Heart right ventricle (tissue), 16 donors: ENCODE measurements at regions of chr1 and their contacts with region 1.

Region 1: DNA sequence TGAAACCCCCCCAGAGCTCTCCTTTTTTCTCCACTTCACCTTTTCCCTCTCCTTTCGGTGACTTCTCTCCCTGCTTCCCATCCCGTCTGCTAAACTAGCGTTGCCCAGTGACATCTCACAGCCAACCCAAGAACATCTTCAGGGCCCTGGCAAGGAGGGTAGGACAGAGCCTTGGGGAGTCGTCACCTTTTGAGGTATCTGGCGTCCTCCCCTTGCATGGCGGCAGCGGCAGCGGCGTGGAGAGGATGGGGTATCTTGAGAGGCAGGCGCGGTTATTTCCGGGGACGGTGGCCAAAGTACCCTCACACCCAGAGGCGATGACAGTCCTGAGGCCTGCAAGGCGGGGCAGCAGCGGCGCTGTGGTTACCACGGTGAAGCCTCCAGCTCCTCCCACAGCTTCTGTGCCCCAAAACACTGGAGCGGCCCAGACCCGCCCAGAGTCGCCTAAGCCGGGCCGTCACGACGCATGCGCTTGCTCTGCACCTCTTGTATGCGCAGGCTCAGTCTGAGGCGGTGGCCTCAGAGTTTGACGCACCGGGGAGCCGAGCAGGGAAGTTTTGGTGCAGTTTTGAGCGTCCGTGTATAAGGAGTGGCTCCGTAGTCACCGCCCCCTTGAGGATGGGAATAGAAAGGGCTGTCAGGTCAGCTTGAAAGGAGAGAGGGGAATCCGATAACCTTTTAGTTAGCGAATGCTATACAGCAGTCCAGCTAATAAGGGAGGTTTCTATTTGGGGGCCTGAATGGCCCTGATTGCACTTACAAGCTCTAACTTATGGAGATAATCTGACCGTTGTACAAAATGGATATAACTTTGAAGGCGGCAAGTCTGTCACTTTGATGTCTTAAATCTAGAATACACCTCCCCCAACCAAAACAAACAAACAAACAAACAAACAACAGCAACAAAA is at the start of gene KIFAP3:
- DNase-seq: peak; percentile 98
- ATAC-seq: peak; percentile 99 to 100 (median 100)
- H3K4me3 ChIP-seq: peak within 1 kb of the TSS; percentile 59 to 85 (median 75)
- H3K27ac ChIP-seq: peak within 1 kb of the TSS; percentile 78 to 95 (median 88)
- H3K4me1 ChIP-seq: peaks cover 0 to 35% (median 27%) of the 10 kb centered on the region in 9 donors
- H3K27me3 ChIP-seq: no peaks in the 10 kb centered on the region
- CTCF ChIP-seq: peak in 8 of 9 donors; percentile 40 to 80 (median 64)
- total RNA-seq, gene KIFAP3: 30.9 to 84.0 (median 60.6) TPM

Region 2: GRCh38 chr1:169928438-169929209 is 145.9 kb before region 1 on chr1:
- intact Hi-C with region 1: loop called in 1 of 10 experiments (anchors 10 kb)
- DNase-seq: no peak
- ATAC-seq: peak in 2 of 8 donors; percentile 56 to 61
- H3K4me3 ChIP-seq: no peak overlapping the region
- H3K27ac ChIP-seq: no peak overlapping the region
- H3K4me1 ChIP-seq: peaks cover 0 to 16% (median 7%) of the 10 kb centered on the region in 9 donors
- H3K27me3 ChIP-seq: no peaks in the 10 kb centered on the region
- CTCF ChIP-seq: peak; percentile 45 to 86 (median 74)

Region 3: GRCh38 chr1:170145770-170146676 is 71.5 kb after region 1 on chr1 and contains the start of gene NTMT2:
- intact Hi-C with region 1: loop called in 4 of 10 experiments (anchors 1 to 10 kb)
- DNase-seq: peak; percentile 61 to 63
- ATAC-seq: peak; percentile 88 to 97 (median 96)
- H3K4me3 ChIP-seq: peak within 1 kb of the TSS in 8 of 10 donors; percentile 6 to 42 (median 32)
- H3K27ac ChIP-seq: peak within 1 kb of the TSS; percentile 61 to 95 (median 82)
- H3K4me1 ChIP-seq: peaks cover 0 to 25% (median 12%) of the 10 kb centered on the region in 9 donors
- H3K27me3 ChIP-seq: no peaks in the 10 kb centered on the region
- CTCF ChIP-seq: no peak
- total RNA-seq, gene NTMT2: 0.92 to 3.2 (median 2.7) TPM

Region 4: DNA sequence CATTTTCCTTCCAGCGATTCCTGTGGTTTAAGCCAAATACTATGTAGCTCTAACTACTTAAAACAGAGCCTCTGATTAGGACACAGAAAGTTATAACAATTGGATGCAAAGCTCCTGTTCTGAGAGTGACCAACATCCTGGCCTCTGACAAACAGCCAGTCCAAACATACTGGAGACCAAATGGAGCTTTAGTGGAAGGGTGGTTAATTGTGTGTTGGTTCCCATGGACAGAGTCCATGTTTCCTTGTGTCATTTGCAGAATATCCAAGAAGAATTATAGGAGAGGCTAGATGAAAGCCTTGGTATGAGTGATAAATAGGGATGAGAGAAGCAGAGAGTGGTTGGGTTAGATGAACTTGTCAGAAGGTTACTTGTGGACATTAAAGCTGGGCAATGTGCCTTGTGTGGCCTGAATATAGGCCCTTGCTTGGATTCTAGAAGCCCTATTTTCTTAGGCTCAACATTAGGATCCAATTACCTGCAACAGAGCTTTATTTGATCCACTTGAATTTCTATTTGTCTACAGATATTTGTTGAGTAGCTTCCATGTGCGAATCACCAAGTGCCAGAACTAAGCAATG is 277.0 kb after region 1 on chr1:
- intact Hi-C with region 1: loop called in 1 of 10 experiments (anchors 10 kb)
- DNase-seq: no peak
- ATAC-seq: peak in 4 of 8 donors; percentile 3 to 45 (median 24)
- H3K4me3 ChIP-seq: no peak overlapping the region
- H3K27ac ChIP-seq: peak overlapping the region in 6 of 10 donors; percentile 2 to 59 (median 31)
- H3K4me1 ChIP-seq: peaks cover 0 to 41% (median 22%) of the 10 kb centered on the region in 9 donors
- H3K27me3 ChIP-seq: no peaks in the 10 kb centered on the region
- CTCF ChIP-seq: no peak